Activated CD8-positive, alpha-beta T cell treated with anti-CD3 and anti-CD28 coated beads for 36 hours (primary cell): ENCODE measurements at regions of chr7 and their contacts with region 1.

Region 1: GRCh38 chr7:43834463-43835251 is 34.7 kb downstream of the MRPS24 start:
- DNase-seq: peak; percentile 62
- ATAC-seq: peak; percentile 63
- H3K4me3 Mint-ChIP-seq: peak overlapping the region; percentile 75
- H3K27ac Mint-ChIP-seq: peak overlapping the region; percentile 94
- H3K4me1 Mint-ChIP-seq: peaks cover 32% of the 10 kb centered on the region
- H3K27me3 Mint-ChIP-seq: peaks cover 2% of the 10 kb centered on the region
- CTCF ChIP-seq: no peak

Region 2: DNA sequence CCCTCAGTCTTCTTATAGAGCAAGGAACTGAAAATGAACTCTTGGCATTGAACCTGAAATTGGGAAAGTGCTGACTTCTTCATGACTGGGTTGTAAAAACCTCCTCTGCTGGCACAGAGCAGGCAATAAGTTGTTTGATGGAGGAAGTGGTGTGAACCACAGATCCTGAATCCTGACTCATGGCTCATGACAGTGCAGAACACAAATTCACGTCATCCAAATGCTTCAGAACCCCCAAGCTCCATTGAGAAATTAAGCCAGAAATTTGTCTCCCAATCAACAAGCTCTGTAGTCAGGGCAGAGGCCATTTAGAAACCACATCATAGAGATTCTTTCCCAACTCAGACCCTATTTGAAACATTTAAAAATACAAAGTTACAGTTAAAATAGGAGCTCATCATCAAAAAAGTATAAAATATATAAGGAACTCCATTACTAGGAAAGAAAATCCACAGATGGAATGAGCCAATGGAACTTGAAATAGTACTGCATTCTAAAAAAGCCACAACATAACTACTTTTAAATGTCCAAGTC is 262.1 kb before region 1 on chr7:
- CTCF ChIA-PET with region 1: interaction called, 150 read pairs
- POLR2A ChIA-PET with region 1: no interaction called
- intact Hi-C with region 1: no loop called
- DNase-seq: peak; percentile 66
- ATAC-seq: peak; percentile 83
- H3K4me3 Mint-ChIP-seq: no peak overlapping the region
- H3K27ac Mint-ChIP-seq: no peak overlapping the region
- H3K4me1 Mint-ChIP-seq: peaks cover 33% of the 10 kb centered on the region
- H3K27me3 Mint-ChIP-seq: peaks cover 1% of the 10 kb centered on the region
- CTCF ChIP-seq: no peak

Region 3: DNA sequence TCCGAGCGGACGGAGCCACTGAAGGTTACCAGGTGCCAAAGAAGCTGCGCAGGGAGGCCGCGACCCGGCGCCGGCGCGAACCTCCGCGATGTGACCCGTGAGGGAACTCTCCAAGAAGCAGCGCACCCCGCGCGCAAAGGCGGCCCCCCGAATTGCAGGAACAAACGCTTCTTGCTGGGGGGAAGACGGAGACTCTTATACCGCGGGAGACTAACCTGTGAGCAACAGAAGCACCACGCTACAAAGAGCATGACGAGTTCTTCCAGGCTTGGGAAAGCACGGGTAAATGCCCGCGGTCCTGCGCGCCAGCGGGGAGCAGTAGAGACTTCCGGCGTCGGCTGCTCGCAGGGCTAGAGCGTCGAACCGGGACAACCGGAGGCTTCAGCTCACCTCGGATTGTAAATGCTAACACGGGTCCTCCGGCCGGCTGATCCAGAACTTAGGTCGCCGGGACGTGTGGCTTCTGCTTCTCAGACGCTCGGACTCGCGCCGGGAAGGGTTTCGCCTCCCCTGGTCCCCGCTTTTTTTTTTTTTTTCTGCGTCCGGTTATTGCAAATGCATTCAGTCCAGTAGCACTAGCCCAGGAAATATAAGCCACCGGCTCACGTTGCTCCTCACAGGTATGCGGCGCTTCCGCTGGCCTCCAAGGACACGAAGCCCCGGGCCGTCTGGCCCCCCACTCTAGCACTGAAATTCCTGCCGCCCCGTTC is 105.3 kb before region 1 on chr7 and contains the start of gene COA1:
- CTCF ChIA-PET with region 1: interaction called, 39 read pairs
- POLR2A ChIA-PET with region 1: interaction called, 5 read pairs
- intact Hi-C with region 1: loop called (anchors 5 kb)
- DNase-seq: peak; percentile 85
- ATAC-seq: peak; percentile 92
- H3K4me3 Mint-ChIP-seq: peak within 1 kb of the TSS; percentile 94
- H3K27ac Mint-ChIP-seq: peak within 1 kb of the TSS; percentile 91
- H3K4me1 Mint-ChIP-seq: peaks cover 33% of the 10 kb centered on the region
- H3K27me3 Mint-ChIP-seq: peaks cover 2% of the 10 kb centered on the region
- CTCF ChIP-seq: peak; percentile 26
- total RNA-seq, gene COA1: 78.8 to 85.6 TPM

Region 4: GRCh38 chr7:43799589-43799988 is 35.1 kb before region 1 on chr7:
- CTCF ChIA-PET with region 1: interaction called, 13 read pairs
- POLR2A ChIA-PET with region 1: no interaction called
- intact Hi-C with region 1: no loop called
- DNase-seq: no peak
- ATAC-seq: no peak
- H3K4me3 Mint-ChIP-seq: no peak overlapping the region
- H3K27ac Mint-ChIP-seq: no peak overlapping the region
- H3K4me1 Mint-ChIP-seq: peaks cover 2% of the 10 kb centered on the region
- H3K27me3 Mint-ChIP-seq: no peaks in the 10 kb centered on the region
- CTCF ChIP-seq: no peak

Region 5: DNA sequence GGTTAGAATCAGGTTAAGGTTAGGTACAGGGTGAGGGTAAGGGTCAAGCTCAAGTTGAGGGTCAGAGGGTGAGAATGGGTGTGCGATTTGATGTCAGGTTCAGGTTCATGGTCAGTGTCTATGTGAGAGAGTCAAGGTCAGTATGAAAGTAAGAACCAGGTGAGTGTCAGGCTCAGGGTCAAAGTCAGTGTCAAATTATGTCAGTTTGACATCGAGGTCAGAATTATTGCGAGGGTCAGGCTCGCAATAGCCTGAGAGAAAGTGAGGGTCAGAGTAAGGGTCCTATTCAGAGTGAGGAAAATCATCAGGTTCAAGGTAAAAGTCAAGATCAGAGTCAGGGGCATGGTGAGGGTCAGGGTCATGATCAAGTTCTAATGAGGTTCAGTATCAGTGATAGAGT is 21.7 kb after region 1 on chr7:
- CTCF ChIA-PET with region 1: interaction called, 11 read pairs
- POLR2A ChIA-PET with region 1: no interaction called
- intact Hi-C with region 1: no loop called
- DNase-seq: no peak
- ATAC-seq: no peak
- H3K4me3 Mint-ChIP-seq: no peak overlapping the region
- H3K27ac Mint-ChIP-seq: no peak overlapping the region
- H3K4me1 Mint-ChIP-seq: no peaks in the 10 kb centered on the region
- H3K27me3 Mint-ChIP-seq: peaks cover 3% of the 10 kb centered on the region
- CTCF ChIP-seq: no peak